ENCODE measurements at regions of chr1 and their contacts with region 1.

Region 1: DNA sequence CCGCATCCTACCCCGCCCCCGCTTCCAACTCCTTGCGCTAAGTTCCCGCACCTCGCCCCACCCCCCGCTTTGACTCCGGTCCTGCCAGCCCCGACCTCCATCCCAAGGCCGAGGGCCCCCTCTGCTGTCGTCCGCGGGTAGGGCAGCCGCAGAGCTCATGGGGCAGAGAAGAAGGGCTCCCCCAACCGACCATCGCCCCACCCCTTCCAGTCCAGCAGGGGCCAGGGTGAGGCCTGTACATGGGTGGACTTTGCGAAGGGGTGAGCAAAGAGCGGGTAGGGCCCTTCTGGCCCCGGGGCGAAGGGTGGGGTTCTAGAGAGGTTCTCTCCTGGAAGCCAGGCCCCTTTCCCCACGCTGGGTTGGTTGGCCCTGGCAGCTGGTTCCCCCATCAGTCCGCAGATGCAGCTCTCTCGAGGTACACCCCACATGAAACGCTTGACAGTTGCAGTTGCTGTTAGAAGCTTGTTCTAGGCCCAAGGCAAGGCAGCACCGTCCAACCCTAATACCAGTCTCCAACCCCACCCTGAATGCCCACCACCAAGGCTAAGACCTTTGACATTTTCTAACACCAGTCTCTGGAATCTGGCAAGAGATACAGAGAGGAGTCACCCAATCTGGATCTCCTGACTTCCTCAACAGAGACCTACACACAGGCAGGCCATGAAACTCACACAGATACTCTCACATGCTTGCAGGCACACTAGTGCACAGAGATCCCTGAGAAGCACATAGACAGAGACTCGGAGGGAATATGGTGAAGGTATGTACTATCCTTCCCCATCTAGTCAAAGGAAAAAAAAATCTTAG is 25.3 kb upstream of the ADGRB2 start:
- DNase-seq: peak; percentile 97
- H3K4me3 ChIP-seq: peak overlapping the region; percentile 67 to 76
- H3K27ac ChIP-seq: peak overlapping the region; percentile 70 to 94; a peak in 3 of 4 replicates
- H3K4me1 ChIP-seq: peaks cover 4 to 53% of the 10 kb centered on the region in 2 experiments; a peak in 2 of 4 replicates
- H3K27me3 ChIP-seq: no peaks in the 10 kb centered on the region
- CTCF ChIP-seq: peak; percentile 82
- EP300 ChIP-seq: no peak
- RAD21 ChIP-seq: peak; percentile 96

Region 2: GRCh38 chr1:31564134-31564989 is 225.1 kb before region 1 on chr1:
- CTCF ChIA-PET with region 1: interaction called, 30 read pairs
- POLR2A ChIA-PET with region 1: no interaction called
- DNase-seq: peak; percentile 79
- H3K4me3 ChIP-seq: no peak overlapping the region
- H3K27ac ChIP-seq: no peak overlapping the region
- H3K4me1 ChIP-seq: peaks cover 0 to 6% of the 10 kb centered on the region in 2 experiments; a peak in 1 of 4 replicates
- H3K27me3 ChIP-seq: no peaks in the 10 kb centered on the region
- CTCF ChIP-seq: peak; percentile 90
- EP300 ChIP-seq: no peak
- RAD21 ChIP-seq: peak; percentile 94

Region 3: GRCh38 chr1:31705080-31705866 is 84.2 kb before region 1 on chr1:
- CTCF ChIA-PET with region 1: interaction called, 19 read pairs
- POLR2A ChIA-PET with region 1: interaction called, 5 read pairs
- DNase-seq: peak; percentile 62
- H3K4me3 ChIP-seq: no peak overlapping the region
- H3K27ac ChIP-seq: no peak overlapping the region
- H3K4me1 ChIP-seq: peaks cover 27 to 62% of the 10 kb centered on the region in 2 experiments
- H3K27me3 ChIP-seq: no peaks in the 10 kb centered on the region
- CTCF ChIP-seq: no peak
- EP300 ChIP-seq: no peak
- RAD21 ChIP-seq: peak; percentile 15; the same call in 1 of the 2 replicates

Region 4: DNA sequence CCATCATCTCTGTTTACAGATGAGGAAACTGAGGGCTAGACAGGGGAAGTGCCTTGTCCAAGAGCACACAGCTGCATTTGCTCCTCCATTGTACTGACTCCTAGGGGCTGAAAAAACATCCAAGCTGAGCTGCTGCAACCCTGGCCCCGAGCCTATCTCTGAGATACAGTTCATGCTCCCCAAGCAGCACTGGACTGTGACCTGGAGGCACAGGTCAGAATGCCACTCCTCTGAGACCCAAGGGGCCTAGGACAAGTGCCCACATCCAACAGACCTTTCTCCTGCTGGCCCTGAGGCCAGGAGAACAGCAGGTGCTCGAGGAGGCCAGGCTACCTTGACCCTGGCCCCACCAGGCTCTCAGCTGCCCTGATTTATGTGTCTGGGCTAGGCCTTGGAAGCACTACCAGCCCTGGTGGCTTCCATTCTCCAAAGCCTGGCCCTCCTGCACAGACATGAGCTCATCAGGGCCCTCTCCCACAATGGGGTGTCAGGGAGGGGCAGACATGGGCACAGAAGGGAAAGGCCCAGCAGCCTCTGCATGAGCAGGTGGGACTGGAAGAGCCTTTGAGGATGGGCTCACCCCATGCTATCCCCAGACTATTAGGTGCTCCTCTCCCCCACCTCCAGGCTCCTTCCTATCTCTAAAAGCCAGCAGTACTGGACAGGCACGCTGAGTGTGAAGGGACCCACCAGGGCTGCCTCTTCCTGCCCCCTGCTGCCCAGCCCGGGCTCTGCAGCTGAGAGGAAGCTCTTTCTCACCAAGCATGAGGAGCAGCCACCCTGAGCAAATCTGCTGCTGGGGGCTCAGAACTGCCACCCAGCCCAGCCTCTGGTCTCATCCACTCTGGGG is 44.1 kb before region 1 on chr1:
- CTCF ChIA-PET with region 1: interaction called, 707 read pairs
- POLR2A ChIA-PET with region 1: interaction called, 5 read pairs
- DNase-seq: peak; percentile 89
- H3K4me3 ChIP-seq: no peak overlapping the region; a peak in 1 of 4 replicates
- H3K27ac ChIP-seq: peak overlapping the region in 1 of 2 experiments; percentile 18; a peak in 1 of 4 replicates
- H3K4me1 ChIP-seq: peaks cover 0 to 45% of the 10 kb centered on the region in 2 experiments; a peak in 1 of 4 replicates
- H3K27me3 ChIP-seq: no peaks in the 10 kb centered on the region
- CTCF ChIP-seq: peak; percentile 80
- EP300 ChIP-seq: no peak
- RAD21 ChIP-seq: peak; percentile 78

Region 5: GRCh38 chr1:31815752-31816500 is 26.5 kb after region 1 on chr1 and contains the start of gene SPOCD1:
- CTCF ChIA-PET with region 1: interaction called, 37 read pairs
- POLR2A ChIA-PET with region 1: no interaction called
- DNase-seq: peak; percentile 64
- H3K4me3 ChIP-seq: peak within 1 kb of the TSS in 1 of 2 experiments; percentile 47; a peak in 1 of 4 replicates
- H3K27ac ChIP-seq: peak within 1 kb of the TSS in 1 of 2 experiments; percentile 73; a peak in 1 of 4 replicates
- H3K4me1 ChIP-seq: peaks cover 0 to 32% of the 10 kb centered on the region in 2 experiments; a peak in 1 of 4 replicates
- H3K27me3 ChIP-seq: no peaks in the 10 kb centered on the region
- CTCF ChIP-seq: peak; percentile 54
- EP300 ChIP-seq: no peak
- RAD21 ChIP-seq: peak; percentile 46
- polyA plus RNA-seq, gene SPOCD1: 10.7 and 12.5 TPM in 2 replicates

Region 6: GRCh38 chr1:31961536-31961935 is 172.1 kb after region 1 on chr1:
- CTCF ChIA-PET with region 1: interaction called, 63 read pairs
- POLR2A ChIA-PET with region 1: interaction called, 3 read pairs
- DNase-seq: no peak
- H3K4me3 ChIP-seq: no peak overlapping the region
- H3K27ac ChIP-seq: no peak overlapping the region
- H3K4me1 ChIP-seq: peaks cover 0 to under 1% of the 10 kb centered on the region in 2 experiments; a peak in 1 of 4 replicates
- H3K27me3 ChIP-seq: no peaks in the 10 kb centered on the region
- CTCF ChIP-seq: no peak
- EP300 ChIP-seq: no peak
- RAD21 ChIP-seq: no peak